K562 (cell line): ENCODE measurements at regions of chr4 and their contacts with region 1.

Region 1: GRCh38 chr4:85578076-85578475 is 103.1 kb downstream of the ARHGAP24 start:
- DNase-seq: peak in 1 of 4 experiments; percentile 14
- ATAC-seq: peak; percentile 43
- H3K4me3 ChIP-seq: peak overlapping the region; percentile 31
- H3K27ac ChIP-seq: peak overlapping the region; percentile 79
- H3K4me1 ChIP-seq: peaks cover 0 to 9% of the 10 kb centered on the region in 2 experiments; a peak in 3 of 5 replicates
- H3K27me3 ChIP-seq: no peaks in the 10 kb centered on the region
- CTCF ChIP-seq: no peak
- EP300 ChIP-seq: no peak
- POLR2A ChIP-seq: no peak
- RAD21 ChIP-seq: no peak

Region 2: DNA sequence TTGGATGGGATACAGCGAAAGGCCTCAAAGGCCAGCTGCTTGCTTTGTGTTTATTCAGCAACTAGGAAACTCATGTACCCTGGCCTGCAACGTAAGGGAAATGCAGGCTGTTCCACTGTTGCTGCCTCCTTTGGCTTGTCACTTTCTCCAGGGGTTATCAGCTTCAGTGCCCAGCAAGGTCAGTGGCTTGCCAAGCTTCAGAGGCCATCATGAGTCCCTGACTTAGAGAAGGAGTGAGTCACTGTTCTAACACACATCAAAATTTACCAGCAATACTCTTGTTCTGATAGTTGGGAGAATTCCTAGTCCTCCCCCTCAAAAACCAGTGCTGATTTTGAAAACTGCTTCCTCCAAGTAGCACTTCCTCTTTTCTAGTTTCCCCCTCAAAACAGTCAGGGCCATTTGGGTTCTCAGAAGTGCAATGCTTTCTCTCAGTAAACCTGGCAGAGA is 147.7 kb after region 1 on chr4:
- CTCF ChIA-PET with region 1: no interaction called
- POLR2A ChIA-PET with region 1: no interaction called
- in situ Hi-C with region 1: loop called (anchors 10 kb)
- intact Hi-C with region 1: loop called (anchors 5 kb)
- DNase-seq: peak; percentile 7 to 67 (median 24)
- ATAC-seq: peak; percentile 87
- H3K4me3 ChIP-seq: no peak overlapping the region
- H3K27ac ChIP-seq: peak overlapping the region; percentile 78
- H3K4me1 ChIP-seq: peaks cover 5 to 22% of the 10 kb centered on the region in 2 experiments; a peak in 3 of 5 replicates
- H3K27me3 ChIP-seq: no peaks in the 10 kb centered on the region
- CTCF ChIP-seq: no peak
- EP300 ChIP-seq: 0 out of 2 replicates have a peak, but pooled peaks have one; percentile 23
- POLR2A ChIP-seq: no peak
- RAD21 ChIP-seq: no peak; a peak in 1 of 4 replicates

Region 3: GRCh38 chr4:85741921-85742591 is 164.0 kb after region 1 on chr4:
- CTCF ChIA-PET with region 1: no interaction called
- POLR2A ChIA-PET with region 1: no interaction called
- in situ Hi-C with region 1: no loop called
- intact Hi-C with region 1: loop called (anchors 5 kb)
- DNase-seq: peak in 2 of 4 experiments; percentile 18 to 64
- ATAC-seq: peak; percentile 71
- H3K4me3 ChIP-seq: no peak overlapping the region
- H3K27ac ChIP-seq: peak overlapping the region; percentile 18; the same call in 1 of the 3 replicates
- H3K4me1 ChIP-seq: peaks cover 0 to 13% of the 10 kb centered on the region in 2 experiments; a peak in 4 of 5 replicates
- H3K27me3 ChIP-seq: no peaks in the 10 kb centered on the region
- CTCF ChIP-seq: no peak
- EP300 ChIP-seq: no peak
- POLR2A ChIP-seq: no peak
- RAD21 ChIP-seq: 0 out of 4 replicates have a peak, but pooled peaks of 1 of the 2 experiments have one; percentile 18